Activated CD4-positive, alpha-beta T cell treated with anti-CD3 and anti-CD28 coated beads for 36 hours (primary cell): ENCODE measurements at regions of chr10 and their contacts with region 1.

Region 1: GRCh38 chr10:97736902-97737769 is at the start of gene ZFYVE27:
- DNase-seq: peak; percentile 98
- ATAC-seq: peak; percentile 90
- H3K4me3 Mint-ChIP-seq: peak within 1 kb of the TSS; percentile 88
- H3K27ac Mint-ChIP-seq: peak within 1 kb of the TSS; percentile 93
- H3K4me1 Mint-ChIP-seq: peaks cover 45% of the 10 kb centered on the region
- H3K27me3 Mint-ChIP-seq: no peaks in the 10 kb centered on the region
- total RNA-seq, gene ZFYVE27: 20.2 to 22.6 TPM

Region 2: DNA sequence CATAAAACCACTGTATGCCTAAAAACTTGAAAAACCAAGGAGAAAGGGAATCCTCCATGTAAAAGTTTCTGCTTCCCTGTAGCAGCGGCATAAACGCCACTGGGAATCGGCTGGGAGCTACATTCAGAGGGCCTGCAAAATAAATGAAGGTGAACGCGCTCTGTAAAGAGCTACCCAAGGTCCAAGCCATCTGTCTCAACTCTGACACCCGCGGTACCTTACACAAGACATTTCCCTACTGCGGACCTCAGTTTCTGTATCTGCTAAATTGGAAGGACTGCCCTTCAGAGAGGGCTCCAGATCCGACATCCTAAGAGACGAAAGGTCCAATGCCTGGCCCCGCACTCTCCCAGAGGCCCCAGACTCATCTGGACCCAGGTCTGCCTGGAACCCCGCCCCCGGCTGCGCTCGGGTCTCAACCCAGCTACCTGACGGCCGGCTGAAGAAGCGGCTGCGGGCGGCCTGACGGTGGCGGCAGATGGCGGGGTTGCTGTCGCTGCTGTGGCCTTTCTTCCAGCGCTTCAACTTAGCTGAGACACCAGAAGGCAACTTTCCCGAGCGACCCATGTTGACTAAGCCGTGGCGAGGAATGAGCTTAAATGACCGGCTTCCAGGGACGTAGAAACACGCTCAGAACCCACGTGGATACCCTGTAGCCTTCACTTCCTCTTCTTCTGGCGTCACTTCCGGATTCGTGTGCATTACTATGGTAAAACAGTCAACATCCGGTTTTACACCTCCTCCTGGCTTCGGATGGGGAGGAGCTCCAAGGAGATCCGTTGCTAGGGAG is 336.3 kb before region 1 on chr10 and contains the start of gene RRP12:
- CTCF ChIA-PET with region 1: interaction called, 3 read pairs
- POLR2A ChIA-PET with region 1: no interaction called
- intact Hi-C with region 1: loop called in 1 of 2 experiments (anchors 2 kb)
- DNase-seq: peak; percentile 89
- ATAC-seq: peak; percentile 99
- H3K4me3 Mint-ChIP-seq: peak within 1 kb of the TSS; percentile 96
- H3K27ac Mint-ChIP-seq: peak within 1 kb of the TSS; percentile 85
- H3K4me1 Mint-ChIP-seq: peaks cover 7% of the 10 kb centered on the region
- H3K27me3 Mint-ChIP-seq: no peaks in the 10 kb centered on the region
- total RNA-seq, gene RRP12: 45.9 to 49.4 TPM

Region 3: GRCh38 chr10:97701438-97702069 is 35.6 kb before region 1 on chr10:
- CTCF ChIA-PET with region 1: interaction called, 384 read pairs
- POLR2A ChIA-PET with region 1: no interaction called
- intact Hi-C with region 1: loop called in 1 of 2 experiments (anchors 1 kb)
- DNase-seq: peak; percentile 67
- ATAC-seq: peak; percentile 99
- H3K4me3 Mint-ChIP-seq: no peak overlapping the region
- H3K27ac Mint-ChIP-seq: no peak overlapping the region
- H3K4me1 Mint-ChIP-seq: no peaks in the 10 kb centered on the region
- H3K27me3 Mint-ChIP-seq: peaks cover 6% of the 10 kb centered on the region

Region 4: DNA sequence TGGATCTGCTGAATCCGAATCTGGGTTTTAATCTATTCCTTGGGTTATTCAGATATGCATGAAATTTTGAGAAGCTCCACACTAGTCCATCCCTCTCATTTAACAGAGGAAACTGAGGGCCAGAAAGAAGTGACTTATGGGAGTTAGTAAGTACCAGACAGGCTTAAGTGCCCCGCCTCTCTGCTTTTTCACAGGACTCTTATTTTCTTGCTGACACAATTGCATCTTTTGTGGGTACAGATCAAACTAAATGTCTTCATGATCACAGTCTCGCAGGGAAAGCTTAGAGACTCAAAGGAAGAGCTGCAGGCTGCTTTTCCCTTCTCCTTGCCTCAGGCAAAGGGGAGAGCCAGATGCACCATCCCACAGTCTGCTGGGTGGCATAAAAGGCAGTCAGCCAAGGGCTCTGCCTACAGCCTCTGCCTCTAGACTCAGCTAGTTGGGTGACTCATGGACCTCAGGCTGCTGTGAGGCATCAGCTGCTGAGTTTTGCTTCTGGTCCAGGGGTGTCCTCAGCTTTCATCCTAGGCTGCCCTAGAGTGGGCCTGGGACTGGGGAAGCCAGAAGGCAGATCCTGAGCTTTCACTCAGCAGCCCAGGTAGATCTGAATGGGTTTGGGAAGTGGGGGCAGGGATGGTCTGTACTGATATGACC is 124.1 kb after region 1 on chr10:
- CTCF ChIA-PET with region 1: no interaction called
- POLR2A ChIA-PET with region 1: no interaction called
- intact Hi-C with region 1: loop called in 1 of 2 experiments (anchors 5 kb)
- DNase-seq: peak; percentile 39
- ATAC-seq: peak; percentile 80
- H3K4me3 Mint-ChIP-seq: no peak overlapping the region
- H3K27ac Mint-ChIP-seq: no peak overlapping the region
- H3K4me1 Mint-ChIP-seq: peaks cover 10% of the 10 kb centered on the region
- H3K27me3 Mint-ChIP-seq: no peaks in the 10 kb centered on the region

Region 5: DNA sequence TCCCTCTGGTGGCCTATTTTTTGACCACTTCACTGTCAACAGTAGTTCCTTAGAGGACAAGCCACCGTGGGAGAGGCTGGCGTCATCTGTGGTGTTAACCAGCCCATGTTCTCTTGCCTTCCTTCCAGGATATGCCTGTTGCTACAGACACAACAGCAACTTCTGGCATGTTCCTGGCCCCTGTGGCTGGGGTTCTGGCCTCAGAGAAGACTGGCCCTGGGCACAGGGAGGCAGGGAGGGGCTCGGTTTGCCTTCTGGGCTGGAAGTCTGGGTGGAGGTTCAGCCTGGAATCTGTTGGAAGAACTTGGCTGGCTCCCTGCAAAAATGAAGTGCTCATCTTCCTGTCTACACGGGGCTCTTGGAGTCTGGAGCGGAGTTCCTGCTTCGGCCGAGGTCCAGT is 138.3 kb after region 1 on chr10:
- CTCF ChIA-PET with region 1: no interaction called
- POLR2A ChIA-PET with region 1: no interaction called
- intact Hi-C with region 1: no loop called
- DNase-seq: no peak
- ATAC-seq: no peak
- H3K4me3 Mint-ChIP-seq: no peak overlapping the region
- H3K27ac Mint-ChIP-seq: no peak overlapping the region
- H3K4me1 Mint-ChIP-seq: no peaks in the 10 kb centered on the region
- H3K27me3 Mint-ChIP-seq: no peaks in the 10 kb centered on the region

Region 6: GRCh38 chr10:98134431-98135221 is 397.5 kb after region 1 on chr10 and contains the start of gene R3HCC1L:
- CTCF ChIA-PET with region 1: no interaction called
- POLR2A ChIA-PET with region 1: no interaction called
- intact Hi-C with region 1: loop called in 1 of 2 experiments (anchors 1 kb)
- DNase-seq: peak; percentile 97
- ATAC-seq: peak; percentile 95
- H3K4me3 Mint-ChIP-seq: peak within 1 kb of the TSS; percentile 86
- H3K27ac Mint-ChIP-seq: peak within 1 kb of the TSS; percentile 93
- H3K4me1 Mint-ChIP-seq: peaks cover 44% of the 10 kb centered on the region
- H3K27me3 Mint-ChIP-seq: no peaks in the 10 kb centered on the region
- total RNA-seq, gene R3HCC1L: 13.5 to 16.8 TPM

Region 7: DNA sequence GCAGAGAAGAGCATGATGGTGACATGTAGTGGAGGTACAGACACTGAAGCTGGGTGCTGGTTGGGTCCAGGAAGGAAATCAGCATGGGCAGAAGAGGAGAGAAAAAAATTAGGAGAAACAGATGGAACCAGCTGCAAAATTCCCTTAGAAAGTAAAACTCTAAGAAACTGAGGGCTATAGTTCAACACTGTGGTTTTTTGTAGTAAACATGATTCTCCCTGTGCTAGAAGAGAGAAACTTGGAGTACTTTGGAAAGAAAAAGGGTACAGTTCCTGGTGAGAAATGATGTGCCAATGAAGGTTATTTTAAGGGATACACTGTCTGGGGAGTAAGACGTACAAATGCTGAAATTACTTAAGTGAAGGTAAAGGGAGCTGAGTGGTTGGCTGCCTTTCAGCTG is 891.1 kb after region 1 on chr10:
- CTCF ChIA-PET with region 1: no interaction called
- POLR2A ChIA-PET with region 1: no interaction called
- intact Hi-C with region 1: no loop called
- DNase-seq: no peak
- ATAC-seq: no peak
- H3K4me3 Mint-ChIP-seq: no peak overlapping the region
- H3K27ac Mint-ChIP-seq: no peak overlapping the region
- H3K4me1 Mint-ChIP-seq: no peaks in the 10 kb centered on the region
- H3K27me3 Mint-ChIP-seq: no peaks in the 10 kb centered on the region